Calu3 (cell line): ENCODE measurements at regions of chr7 and their contacts with region 1.

Region 1: GRCh38 chr7:45136106-45137060 is 21.2 kb upstream of the RAMP3 start:
- DNase-seq: peak; percentile 78
- H3K4me3 Mint-ChIP-seq: no peak overlapping the region
- H3K27ac Mint-ChIP-seq: no peak overlapping the region
- H3K4me1 Mint-ChIP-seq: peaks cover 7% of the 10 kb centered on the region
- H3K27me3 Mint-ChIP-seq: peaks cover 66% of the 10 kb centered on the region
- CTCF ChIP-seq: peak; percentile 91

Region 2: DNA sequence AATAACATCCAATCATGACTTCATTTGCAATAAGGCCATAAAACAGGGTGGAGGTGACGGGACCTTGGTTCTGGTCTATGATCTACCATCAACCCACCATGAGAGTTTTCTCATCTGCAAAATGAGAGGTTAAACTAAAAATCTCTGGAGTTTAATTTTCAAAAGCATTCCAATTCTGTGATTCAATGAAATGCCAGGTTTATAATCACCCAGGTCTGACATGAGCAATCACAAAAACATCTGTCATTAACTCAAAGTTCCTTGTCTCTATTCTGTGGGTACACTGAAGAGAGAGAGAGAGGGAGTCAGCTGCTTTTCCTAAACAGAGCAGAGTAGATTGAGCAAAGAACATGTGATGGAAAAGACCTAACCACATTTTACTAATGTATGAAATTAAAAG is 721.3 kb before region 1 on chr7:
- CTCF ChIA-PET with region 1: no interaction called
- intact Hi-C with region 1: no loop called
- DNase-seq: no peak
- H3K4me3 Mint-ChIP-seq: peak overlapping the region; percentile 25
- H3K27ac Mint-ChIP-seq: peak overlapping the region; percentile 45
- H3K4me1 Mint-ChIP-seq: peaks cover 44% of the 10 kb centered on the region
- H3K27me3 Mint-ChIP-seq: no peaks in the 10 kb centered on the region
- CTCF ChIP-seq: no peak

Region 3: GRCh38 chr7:44750921-44751571 is 385.3 kb before region 1 on chr7:
- CTCF ChIA-PET with region 1: no interaction called
- intact Hi-C with region 1: no loop called
- DNase-seq: peak; percentile 40
- H3K4me3 Mint-ChIP-seq: peak overlapping the region; percentile 95
- H3K27ac Mint-ChIP-seq: peak overlapping the region; percentile 15
- H3K4me1 Mint-ChIP-seq: peaks cover 51% of the 10 kb centered on the region
- H3K27me3 Mint-ChIP-seq: no peaks in the 10 kb centered on the region
- CTCF ChIP-seq: no peak

Region 4: DNA sequence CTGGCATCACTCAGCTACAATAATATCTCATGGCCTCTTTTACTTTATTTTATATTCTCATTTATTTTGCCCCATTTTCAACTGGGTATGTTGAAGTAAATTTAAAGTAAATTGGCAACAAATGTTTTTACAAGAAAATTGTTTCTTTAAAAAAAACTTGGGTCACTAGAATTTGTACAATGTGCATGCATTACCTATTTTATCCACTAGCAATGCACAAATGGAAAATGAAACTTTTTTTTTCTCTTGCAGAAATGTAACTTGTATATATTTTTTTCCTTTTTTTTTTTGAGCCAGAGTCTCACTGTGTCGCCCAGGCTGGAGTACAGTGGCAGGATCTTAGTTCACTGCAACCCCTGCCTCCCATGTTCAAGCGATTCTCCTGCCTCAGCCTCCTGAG is 278.2 kb before region 1 on chr7:
- CTCF ChIA-PET with region 1: interaction called, 13 read pairs
- intact Hi-C with region 1: loop called (anchors 1 kb)
- DNase-seq: no peak
- H3K4me3 Mint-ChIP-seq: no peak overlapping the region
- H3K27ac Mint-ChIP-seq: no peak overlapping the region
- H3K4me1 Mint-ChIP-seq: peaks cover 20% of the 10 kb centered on the region
- H3K27me3 Mint-ChIP-seq: no peaks in the 10 kb centered on the region
- CTCF ChIP-seq: peak; percentile 29

Region 5: DNA sequence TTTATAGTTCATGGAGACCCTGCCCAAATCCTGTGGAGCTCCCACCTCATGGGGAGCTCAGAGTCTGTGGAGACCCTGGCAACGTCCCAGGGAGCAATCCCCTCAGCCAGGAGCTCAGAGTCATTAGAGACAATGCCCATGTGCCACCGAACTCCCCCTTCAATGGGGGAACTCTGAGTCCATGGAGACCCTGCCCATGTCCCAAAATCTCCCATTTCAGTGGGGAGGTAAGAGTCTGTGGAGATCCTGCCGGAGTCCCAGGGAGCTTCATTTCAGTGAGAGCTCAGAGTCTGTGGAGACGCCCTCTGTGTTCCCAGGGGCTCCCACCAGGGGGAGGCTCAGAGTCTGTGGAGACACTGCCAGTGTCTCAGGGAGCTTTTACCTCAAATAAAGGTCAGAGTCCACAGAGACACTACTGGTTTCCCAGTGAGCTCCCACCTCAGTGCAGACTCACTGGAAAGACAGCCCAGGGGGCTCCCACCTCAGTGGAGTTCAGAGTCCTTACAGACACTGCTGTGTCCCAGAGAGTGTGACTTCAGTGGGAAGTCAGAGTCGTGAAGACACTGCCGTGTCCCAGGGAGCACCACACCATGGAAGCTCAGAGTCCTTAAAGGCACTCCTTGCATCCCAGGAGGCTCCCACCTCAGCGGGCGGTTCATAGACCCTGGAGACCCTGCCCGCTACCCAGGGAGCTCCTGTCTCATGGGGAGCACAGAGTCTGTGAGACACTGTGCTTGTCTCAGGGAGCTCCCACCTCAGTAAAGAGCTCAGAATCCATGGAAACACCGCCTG is 162.6 kb before region 1 on chr7:
- CTCF ChIA-PET with region 1: interaction called, 47 read pairs
- intact Hi-C with region 1: loop called (anchors 1 kb)
- DNase-seq: peak; percentile 68
- H3K4me3 Mint-ChIP-seq: no peak overlapping the region
- H3K27ac Mint-ChIP-seq: no peak overlapping the region
- H3K4me1 Mint-ChIP-seq: peaks cover 11% of the 10 kb centered on the region
- H3K27me3 Mint-ChIP-seq: peaks cover 17% of the 10 kb centered on the region
- CTCF ChIP-seq: peak; percentile 70

Region 6: GRCh38 chr7:45078125-45078681 is 58.2 kb before region 1 on chr7:
- CTCF ChIA-PET with region 1: no interaction called
- intact Hi-C with region 1: loop called (anchors 2 kb)
- DNase-seq: no peak
- H3K4me3 Mint-ChIP-seq: no peak overlapping the region
- H3K27ac Mint-ChIP-seq: peak overlapping the region; percentile 9
- H3K4me1 Mint-ChIP-seq: peaks cover 14% of the 10 kb centered on the region
- H3K27me3 Mint-ChIP-seq: no peaks in the 10 kb centered on the region
- CTCF ChIP-seq: no peak